ENCODE measurements at regions of chr5 and their contacts with region 1.

Region 1: DNA sequence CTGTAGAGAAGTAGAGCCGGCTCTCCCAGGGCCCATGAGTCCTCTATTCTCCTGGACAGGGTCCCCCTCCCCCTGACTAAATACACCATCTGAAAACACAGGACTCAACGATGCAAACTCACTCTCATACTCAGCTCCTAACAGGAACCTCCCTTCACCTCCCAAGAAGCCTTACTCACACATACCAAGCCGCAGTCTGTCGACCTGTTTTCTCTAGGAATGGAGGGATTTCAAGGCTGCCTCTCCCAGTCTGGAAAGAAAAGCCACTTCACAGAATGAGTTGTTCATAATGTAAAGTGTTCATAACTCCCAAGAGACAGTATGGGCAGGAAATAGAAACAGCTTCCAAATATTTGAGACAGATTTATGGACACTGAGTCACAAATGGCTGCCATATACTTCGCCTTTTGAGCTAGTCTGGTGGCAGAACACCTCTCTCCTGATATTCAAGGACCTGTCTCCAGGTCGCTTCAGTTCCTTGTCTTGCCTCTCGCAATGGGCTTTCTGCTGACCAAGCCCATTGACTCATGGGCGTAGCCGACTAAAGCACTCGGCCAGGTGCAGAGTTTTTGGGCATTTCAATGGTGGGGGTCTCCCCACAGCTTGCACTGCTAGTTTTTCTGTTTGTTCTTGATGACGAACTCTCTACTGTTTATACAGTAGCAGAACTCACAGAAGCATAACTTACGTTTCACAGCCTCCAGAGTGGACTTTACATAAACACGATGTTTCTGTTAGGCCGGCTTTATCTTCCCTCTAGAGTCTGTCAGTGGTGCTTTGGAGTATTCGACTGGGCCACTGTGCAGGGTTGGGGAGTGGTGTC is 25.0 kb upstream of the IL17B start:
- DNase-seq: no peak
- H3K4me3 ChIP-seq: no peak overlapping the region
- H3K27ac ChIP-seq: no peak overlapping the region
- H3K4me1 ChIP-seq: no peaks in the 10 kb centered on the region
- H3K27me3 ChIP-seq: peaks cover 0 to 1% of the 10 kb centered on the region in 2 experiments
- CTCF ChIP-seq: no peak
- POLR2A ChIP-seq: no peak

Region 2: DNA sequence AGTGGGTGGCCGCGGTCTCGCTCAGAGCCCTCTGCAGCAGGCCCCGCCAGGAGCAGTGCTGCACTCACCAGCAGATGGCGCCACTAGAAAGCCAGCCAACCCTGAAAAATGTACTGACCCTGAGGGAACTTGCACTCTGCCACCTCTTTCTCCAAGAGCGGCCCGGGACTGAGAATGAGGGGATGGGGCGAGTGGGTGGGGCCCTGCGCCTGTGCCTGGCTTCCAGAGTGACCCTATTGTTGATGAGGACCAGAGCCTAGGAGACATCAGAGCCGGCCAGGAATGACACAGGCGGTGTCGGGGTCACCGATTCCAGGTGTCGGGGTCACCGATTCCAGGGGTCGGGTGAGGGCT is 22.2 kb before region 1 on chr5:
- CTCF ChIA-PET with region 1: interaction called, 12 read pairs
- POLR2A ChIA-PET with region 1: no interaction called
- dilution Hi-C with region 1: no loop called
- intact Hi-C with region 1: no loop called
- DNase-seq: peak; percentile 60
- H3K4me3 ChIP-seq: no peak overlapping the region
- H3K27ac ChIP-seq: no peak overlapping the region
- H3K4me1 ChIP-seq: no peaks in the 10 kb centered on the region
- H3K27me3 ChIP-seq: no peaks in the 10 kb centered on the region
- CTCF ChIP-seq: peak; percentile 86 to 97
- POLR2A ChIP-seq: no peak

Region 3: DNA sequence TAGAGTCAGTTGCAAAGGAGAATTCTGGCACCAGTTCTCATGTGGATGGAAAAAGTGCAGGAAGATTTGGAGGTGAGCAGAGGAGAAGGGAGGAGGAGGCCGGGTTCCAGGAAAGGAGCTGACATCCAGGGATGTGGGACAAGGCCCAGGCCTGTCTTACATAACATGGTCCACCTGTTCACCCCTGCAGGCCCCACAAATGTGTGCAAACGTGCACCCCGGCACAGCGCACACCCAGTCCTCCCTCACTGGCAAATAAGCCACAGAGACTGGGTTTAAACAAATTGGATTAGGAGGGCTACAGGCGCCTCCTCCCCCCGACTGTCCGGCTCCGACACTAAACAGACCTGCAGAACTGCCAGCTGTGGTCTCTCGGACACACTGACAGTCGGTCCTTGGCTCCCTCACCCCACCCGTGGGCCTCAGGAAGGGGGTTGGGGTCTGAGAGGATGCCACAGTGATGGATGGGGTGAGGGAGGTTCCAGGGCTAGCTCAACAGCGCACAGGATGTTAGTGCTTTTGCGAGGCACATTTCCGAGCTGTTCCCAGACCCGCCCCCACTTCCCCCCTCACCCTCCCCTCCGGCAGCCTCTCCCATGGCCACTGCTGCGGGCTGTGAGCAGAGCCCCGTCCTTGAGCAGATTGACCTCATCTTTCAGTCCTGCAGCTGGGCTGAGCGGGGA is 18.4 kb after region 1 on chr5:
- CTCF ChIA-PET with region 1: interaction called, 3 read pairs
- POLR2A ChIA-PET with region 1: no interaction called
- dilution Hi-C with region 1: no loop called
- intact Hi-C with region 1: loop called (anchors 2 kb)
- DNase-seq: peak; percentile 63
- H3K4me3 ChIP-seq: no peak overlapping the region
- H3K27ac ChIP-seq: no peak overlapping the region
- H3K4me1 ChIP-seq: peaks cover 10% of the 10 kb centered on the region
- H3K27me3 ChIP-seq: no peaks in the 10 kb centered on the region
- CTCF ChIP-seq: no peak
- POLR2A ChIP-seq: no peak

Region 4: GRCh38 chr5:149913436-149914419 is 509.6 kb after region 1 on chr5:
- CTCF ChIA-PET with region 1: no interaction called
- POLR2A ChIA-PET with region 1: no interaction called
- dilution Hi-C with region 1: no loop called
- intact Hi-C with region 1: no loop called
- DNase-seq: peak; percentile 61
- H3K4me3 ChIP-seq: no peak overlapping the region
- H3K27ac ChIP-seq: peak overlapping the region; percentile 10
- H3K4me1 ChIP-seq: peaks cover 28% of the 10 kb centered on the region
- H3K27me3 ChIP-seq: no peaks in the 10 kb centered on the region
- CTCF ChIP-seq: no peak
- POLR2A ChIP-seq: no peak

Measured in endothelial cell of umbilical vein (primary cell).